CD4-positive, alpha-beta T cell (primary cell): ENCODE measurements at regions of chr1 and their contacts with region 1.

Region 1: DNA sequence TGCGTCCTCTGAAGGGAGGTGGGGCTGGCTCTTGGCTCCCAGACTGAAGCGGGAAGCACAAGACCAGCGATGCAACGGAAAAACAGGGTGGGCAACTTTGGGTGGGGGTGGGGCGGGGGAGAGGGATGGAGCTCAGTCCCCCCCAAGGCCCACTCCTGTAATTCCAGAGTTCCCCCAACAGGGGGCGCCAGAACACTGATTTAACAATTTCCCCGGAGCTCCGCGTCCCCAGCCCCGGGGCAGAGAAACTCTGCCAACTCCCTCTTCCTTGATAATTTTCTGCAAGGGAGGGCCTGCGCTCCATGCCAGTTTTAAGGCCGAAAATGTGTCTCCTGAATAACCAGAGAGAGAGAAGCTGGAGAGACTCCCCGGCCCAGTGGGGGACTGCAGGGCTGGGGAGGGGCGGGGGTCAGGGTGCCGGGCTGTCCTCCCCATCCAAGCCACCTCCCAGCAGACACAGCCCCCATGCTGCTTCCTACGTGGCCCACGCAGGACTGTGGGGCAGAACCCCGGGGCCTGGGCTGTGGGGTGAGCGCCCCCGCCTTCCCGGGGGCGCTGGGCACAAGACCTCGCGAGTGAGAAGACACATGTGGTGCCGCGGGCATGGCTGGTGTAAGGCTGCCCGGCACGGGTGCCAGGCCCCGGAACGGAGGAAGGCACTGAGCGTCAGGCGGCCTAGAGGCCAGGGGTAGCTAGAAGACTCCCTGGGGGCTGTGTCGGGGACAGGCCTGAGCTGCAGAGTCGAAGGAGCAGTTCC is 51.4 kb downstream of the KIF21B start:
- DNase-seq: peak; percentile 55 to 77 (median 62)
- ATAC-seq: peak; percentile 76
- H3K4me3 ChIP-seq: no peak overlapping the region
- H3K4me3 Mint-ChIP-seq: no peak overlapping the region
- H3K27ac ChIP-seq: no peak overlapping the region
- H3K27ac Mint-ChIP-seq: no peak overlapping the region
- H3K4me1 ChIP-seq: peaks cover 3% of the 10 kb centered on the region
- H3K4me1 Mint-ChIP-seq: no peaks in the 10 kb centered on the region
- H3K27me3 ChIP-seq: no peaks in the 10 kb centered on the region
- H3K27me3 Mint-ChIP-seq: no peaks in the 10 kb centered on the region
- CTCF ChIP-seq: peak; percentile 99

Region 2: DNA sequence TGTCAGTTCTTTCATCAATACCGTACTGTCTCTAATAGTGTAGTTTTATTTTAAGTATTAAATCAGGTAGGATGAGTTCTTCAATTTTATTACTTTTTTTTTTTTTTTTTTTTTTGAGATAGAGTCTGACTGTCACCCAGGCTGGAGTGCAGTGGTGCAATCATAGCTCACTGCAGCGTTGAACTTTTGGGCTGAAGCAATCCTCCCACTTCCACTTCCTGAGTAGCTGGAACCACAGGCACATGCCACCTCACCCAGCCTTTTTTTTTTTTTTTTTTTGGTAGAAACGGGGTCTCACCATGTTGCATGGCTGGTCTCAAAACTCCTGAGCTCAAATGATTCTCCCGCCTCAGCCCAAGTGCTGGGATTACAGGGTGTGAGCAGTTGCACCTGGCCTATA is 33.2 kb before region 1 on chr1:
- CTCF ChIA-PET with region 1: no interaction called
- POLR2A ChIA-PET with region 1: no interaction called
- intact Hi-C with region 1: no loop called
- DNase-seq: peak in 4 of 14 experiments; percentile 11 to 49 (median 34)
- ATAC-seq: peak; percentile 55
- H3K4me3 ChIP-seq: no peak overlapping the region
- H3K4me3 Mint-ChIP-seq: no peak overlapping the region
- H3K27ac ChIP-seq: no peak overlapping the region
- H3K27ac Mint-ChIP-seq: no peak overlapping the region
- H3K4me1 ChIP-seq: peaks cover 8% of the 10 kb centered on the region
- H3K4me1 Mint-ChIP-seq: peaks cover 5% of the 10 kb centered on the region
- H3K27me3 ChIP-seq: no peaks in the 10 kb centered on the region
- H3K27me3 Mint-ChIP-seq: no peaks in the 10 kb centered on the region
- CTCF ChIP-seq: no peak

Region 3: GRCh38 chr1:201114236-201115131 is 142.4 kb after region 1 on chr1:
- CTCF ChIA-PET with region 1: interaction called, 13 read pairs
- POLR2A ChIA-PET with region 1: interaction called, 7 read pairs
- intact Hi-C with region 1: loop called (anchors 2 kb)
- DNase-seq: peak; percentile 45 to 86 (median 64)
- ATAC-seq: peak; percentile 87
- H3K4me3 ChIP-seq: peak overlapping the region; percentile 84
- H3K4me3 Mint-ChIP-seq: peak overlapping the region; percentile 95
- H3K27ac ChIP-seq: peak overlapping the region; percentile 13 to 32
- H3K27ac Mint-ChIP-seq: peak overlapping the region; percentile 76
- H3K4me1 ChIP-seq: peaks cover 16% of the 10 kb centered on the region
- H3K4me1 Mint-ChIP-seq: peaks cover 30% of the 10 kb centered on the region
- H3K27me3 ChIP-seq: no peaks in the 10 kb centered on the region
- H3K27me3 Mint-ChIP-seq: no peaks in the 10 kb centered on the region
- CTCF ChIP-seq: peak; percentile 77

Region 4: DNA sequence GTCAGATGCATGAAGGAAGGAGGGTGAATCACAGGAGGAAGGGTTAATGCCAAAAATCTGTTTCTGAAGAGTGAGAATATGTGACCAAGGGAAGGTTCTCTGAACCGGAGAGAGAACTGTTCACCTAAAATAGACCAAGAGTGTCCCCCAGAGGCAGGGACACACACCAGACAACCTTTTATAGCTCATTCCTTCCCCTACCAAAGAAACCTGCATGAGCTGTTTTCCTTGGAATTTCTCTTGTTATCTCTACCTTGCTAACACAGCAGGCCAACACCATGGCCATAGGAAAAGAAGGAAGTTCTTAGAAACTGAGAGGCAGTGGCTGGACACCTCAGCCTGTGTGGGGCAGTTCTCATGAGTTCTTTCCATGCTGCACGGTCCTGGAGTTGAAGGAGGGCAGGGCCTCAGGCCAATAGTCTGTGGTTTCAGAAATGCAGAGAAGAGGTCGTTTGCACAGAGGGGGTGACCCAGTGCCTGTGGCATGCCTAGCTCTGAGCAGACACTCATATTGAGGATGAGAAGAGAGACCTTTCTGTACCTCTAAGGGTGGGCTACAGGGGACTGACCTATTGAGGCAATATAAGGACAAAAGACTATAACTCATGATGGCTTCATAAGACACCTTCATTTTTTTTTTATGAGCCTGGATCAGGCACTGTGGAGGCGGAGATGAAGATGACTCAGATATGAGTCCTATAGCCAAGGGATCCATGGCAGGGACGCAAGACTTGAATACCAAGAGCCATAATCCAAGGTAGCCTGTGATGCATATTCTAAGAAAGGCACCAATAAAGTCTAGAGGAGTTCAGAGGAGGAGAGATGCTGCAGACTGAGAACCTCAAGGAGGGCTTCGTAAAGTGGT is 257.9 kb after region 1 on chr1:
- CTCF ChIA-PET with region 1: no interaction called
- POLR2A ChIA-PET with region 1: no interaction called
- intact Hi-C with region 1: loop called in 1 of 2 experiments (anchors 10 kb)
- DNase-seq: no peak
- ATAC-seq: no peak
- H3K4me3 ChIP-seq: no peak overlapping the region
- H3K4me3 Mint-ChIP-seq: no peak overlapping the region
- H3K27ac ChIP-seq: no peak overlapping the region
- H3K27ac Mint-ChIP-seq: no peak overlapping the region
- H3K4me1 ChIP-seq: no peaks in the 10 kb centered on the region
- H3K4me1 Mint-ChIP-seq: no peaks in the 10 kb centered on the region
- H3K27me3 ChIP-seq: peaks cover 2 to 15% of the 10 kb centered on the region in 2 experiments
- H3K27me3 Mint-ChIP-seq: peaks cover 32% of the 10 kb centered on the region
- CTCF ChIP-seq: no peak